HAP-1 (cell line): ENCODE measurements at regions of chr9 and their contacts with region 1.

Region 1: DNA sequence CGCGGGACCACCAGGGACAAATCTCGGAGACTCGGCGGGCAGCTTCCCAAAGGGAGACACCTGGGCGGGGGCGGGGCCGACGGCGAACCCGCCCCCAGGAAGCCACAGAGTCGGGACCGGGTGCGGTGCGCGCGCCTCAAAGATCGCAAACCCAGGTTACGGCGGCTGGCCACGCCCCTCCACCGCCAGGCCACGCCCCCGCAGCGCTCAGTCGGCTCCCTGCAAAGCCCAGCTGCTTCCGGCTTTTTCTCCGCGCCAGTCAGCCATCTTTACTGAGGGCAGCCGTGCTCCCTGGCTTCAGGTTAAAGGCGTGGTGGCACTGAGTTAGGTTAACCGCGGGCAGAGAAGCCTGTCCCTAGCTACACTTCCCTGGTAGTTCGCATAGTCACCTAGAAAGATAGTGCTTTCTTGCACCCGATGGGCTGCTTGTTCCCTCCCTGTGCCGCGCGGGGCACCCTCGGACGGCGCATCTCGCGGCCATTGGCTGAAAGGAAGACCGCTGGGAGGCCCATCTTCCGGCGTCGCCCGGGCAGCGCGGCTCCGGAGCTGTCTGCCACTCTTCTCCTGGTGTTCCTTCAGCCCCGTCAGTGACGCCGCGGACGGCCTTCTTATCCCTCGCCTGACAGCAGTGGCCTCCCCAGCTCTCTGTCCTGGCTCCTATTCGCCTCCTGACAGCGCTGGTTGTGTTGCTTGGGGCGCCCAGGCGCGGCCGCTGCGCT is at the start of gene TBC1D2:
- DNase-seq: peak; percentile 80 to 96
- H3K4me3 ChIP-seq: peak within 1 kb of the TSS; percentile 64
- H3K4me1 ChIP-seq: peaks cover 8% of the 10 kb centered on the region
- H3K27me3 ChIP-seq: no peaks in the 10 kb centered on the region; the same call in 1 of the 2 replicates

Region 2: GRCh38 chr9:97710356-97711222 is 545.1 kb before region 1 on chr9:
- in situ Hi-C with region 1: loop called (anchors 25 kb)
- DNase-seq: peak; percentile 57 to 58
- H3K4me3 ChIP-seq: no peak overlapping the region
- H3K4me1 ChIP-seq: no peaks in the 10 kb centered on the region; the same call in 1 of the 2 replicates
- H3K27me3 ChIP-seq: peaks cover 21% of the 10 kb centered on the region

Region 3: GRCh38 chr9:97921959-97922724 is 333.6 kb before region 1 on chr9 and contains the start of gene TRMO:
- in situ Hi-C with region 1: loop called (anchors 25 kb)
- DNase-seq: peak; percentile 94 to 97
- H3K4me3 ChIP-seq: peak within 1 kb of the TSS; percentile 50
- H3K4me1 ChIP-seq: peaks cover 11% of the 10 kb centered on the region
- H3K27me3 ChIP-seq: peaks cover 12% of the 10 kb centered on the region